AG04450 (cell line): ENCODE measurements at regions of chr19 and their contacts with region 1.

Region 1: GRCh38 chr19:48588670-48589399 is 17.7 kb upstream of the SPACA4 start:
- DNase-seq: peak; percentile 58
- H3K4me3 ChIP-seq: peak overlapping the region; percentile 56
- H3K27ac ChIP-seq: no peak overlapping the region
- H3K27me3 ChIP-seq: no peaks in the 10 kb centered on the region
- CTCF ChIP-seq: peak; percentile 92

Region 2: GRCh38 chr19:48391107-48391986 is 197.5 kb before region 1 on chr19 and contains the start of gene KDELR1:
- CTCF ChIA-PET with region 1: interaction called, 15 read pairs
- POLR2A ChIA-PET with region 1: no interaction called
- DNase-seq: no peak
- H3K4me3 ChIP-seq: peak within 1 kb of the TSS; percentile 97
- H3K27ac ChIP-seq: peak within 1 kb of the TSS; percentile 91
- H3K27me3 ChIP-seq: peaks cover 29% of the 10 kb centered on the region
- CTCF ChIP-seq: peak; percentile 94
- polyA plus RNA-seq, gene KDELR1: 168 and 187 TPM in 2 replicates

Region 3: GRCh38 chr19:48492925-48493717 is 95.7 kb before region 1 on chr19:
- CTCF ChIA-PET with region 1: interaction called, 174 read pairs
- POLR2A ChIA-PET with region 1: interaction called, 8 read pairs
- DNase-seq: peak; percentile 91
- H3K4me3 ChIP-seq: peak overlapping the region; percentile 69
- H3K27ac ChIP-seq: peak overlapping the region; percentile 31
- H3K27me3 ChIP-seq: peaks cover 4% of the 10 kb centered on the region
- CTCF ChIP-seq: no peak

Region 4: DNA sequence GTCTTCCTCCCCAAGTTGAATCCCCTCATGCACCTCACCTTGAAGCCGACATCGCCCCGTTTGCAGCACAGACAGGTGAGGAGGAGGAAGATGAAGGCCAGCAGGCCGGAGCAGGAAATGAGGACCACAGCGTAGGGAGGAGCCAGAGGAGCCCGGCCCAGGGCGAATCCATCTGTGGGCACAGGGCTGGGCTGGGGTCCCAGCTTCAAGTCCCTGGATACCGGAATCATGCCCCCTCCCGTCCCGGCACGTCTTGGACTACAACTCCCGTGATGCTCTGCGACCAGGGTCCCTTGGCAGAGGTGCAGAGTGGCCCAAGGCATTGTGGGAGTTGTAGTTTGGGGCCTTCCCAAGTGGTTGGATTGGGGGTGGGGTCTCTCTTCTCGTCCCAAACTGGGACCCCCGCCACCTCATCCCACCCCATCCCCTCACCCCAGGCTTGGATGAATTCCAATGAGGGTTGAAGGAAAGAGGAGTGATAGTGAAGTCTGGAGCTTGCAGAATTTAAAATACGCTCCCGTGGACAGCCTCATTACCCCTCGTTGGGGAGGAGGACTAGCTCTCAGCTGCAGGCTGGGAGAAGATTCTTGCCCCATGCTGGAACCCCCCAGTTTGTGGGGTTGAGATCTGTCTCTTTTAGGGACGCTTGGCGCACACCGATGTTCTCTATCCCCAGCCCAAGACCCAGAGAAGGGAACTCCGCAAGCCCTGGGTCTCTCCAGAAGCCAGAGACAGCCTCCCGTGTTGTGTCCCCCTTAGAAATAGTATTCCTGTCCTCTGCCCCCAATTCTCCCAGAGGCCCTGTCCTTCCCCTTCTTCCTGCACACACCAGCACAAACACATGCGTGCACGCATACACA is 78.2 kb before region 1 on chr19:
- CTCF ChIA-PET with region 1: interaction called, 207 read pairs
- POLR2A ChIA-PET with region 1: interaction called, 3 read pairs
- DNase-seq: no peak
- H3K4me3 ChIP-seq: peak overlapping the region; percentile 39
- H3K27ac ChIP-seq: no peak overlapping the region
- H3K27me3 ChIP-seq: peaks cover 36% of the 10 kb centered on the region
- CTCF ChIP-seq: no peak

Region 5: GRCh38 chr19:48569814-48570213 is 19.0 kb before region 1 on chr19:
- CTCF ChIA-PET with region 1: interaction called, 19 read pairs
- POLR2A ChIA-PET with region 1: no interaction called
- DNase-seq: no peak
- H3K4me3 ChIP-seq: no peak overlapping the region
- H3K27ac ChIP-seq: peak overlapping the region; percentile 11
- H3K27me3 ChIP-seq: no peaks in the 10 kb centered on the region
- CTCF ChIP-seq: no peak

Region 6: GRCh38 chr19:48600679-48601417 is 12.0 kb after region 1 on chr19:
- CTCF ChIA-PET with region 1: interaction called, 12 read pairs
- POLR2A ChIA-PET with region 1: no interaction called
- DNase-seq: no peak
- H3K4me3 ChIP-seq: no peak overlapping the region
- H3K27ac ChIP-seq: no peak overlapping the region
- H3K27me3 ChIP-seq: peaks cover 15% of the 10 kb centered on the region
- CTCF ChIP-seq: no peak

Region 7: GRCh38 chr19:48608798-48609263 is 20.0 kb after region 1 on chr19:
- CTCF ChIA-PET with region 1: interaction called, 11 read pairs
- POLR2A ChIA-PET with region 1: no interaction called
- DNase-seq: no peak
- H3K4me3 ChIP-seq: no peak overlapping the region
- H3K27ac ChIP-seq: no peak overlapping the region
- H3K27me3 ChIP-seq: no peaks in the 10 kb centered on the region
- CTCF ChIP-seq: peak; percentile 62